ENCODE measurements at regions of chr17 and their contacts with region 1.

Region 1: DNA sequence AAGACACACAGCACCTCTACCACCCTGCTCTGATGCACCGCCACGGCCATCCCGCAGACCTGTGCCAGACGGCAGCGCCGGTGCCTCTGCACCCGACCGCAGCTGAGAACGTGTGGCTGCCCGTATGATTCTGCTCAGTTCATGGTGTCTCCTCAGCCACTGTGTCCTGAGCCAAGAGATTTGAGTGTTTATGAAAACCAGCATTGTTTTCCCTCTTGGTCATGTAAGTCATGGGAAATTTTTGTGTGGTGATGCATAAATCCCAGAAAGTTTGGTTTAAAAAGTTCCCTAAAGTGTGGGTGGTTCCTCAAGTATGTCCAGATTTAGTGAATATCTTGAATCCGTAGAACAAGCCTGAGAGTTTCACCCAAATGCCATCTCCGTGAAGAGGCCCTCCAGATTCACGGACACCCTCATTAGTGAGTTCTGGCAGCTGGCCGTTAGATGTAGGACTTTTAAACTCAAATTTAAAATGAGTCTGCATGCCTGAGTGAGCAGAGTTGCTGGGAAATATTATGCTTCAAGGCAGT is 57.6 kb downstream of the CDRT4 start:
- DNase-seq: no peak
- ATAC-seq: no peak
- H3K4me3 ChIP-seq: no peak overlapping the region
- H3K4me3 Mint-ChIP-seq: no peak overlapping the region
- H3K27ac ChIP-seq: no peak overlapping the region
- H3K27ac Mint-ChIP-seq: no peak overlapping the region
- H3K4me1 ChIP-seq: no peaks in the 10 kb centered on the region
- H3K4me1 Mint-ChIP-seq: no peaks in the 10 kb centered on the region
- H3K27me3 ChIP-seq: peaks cover 0 to 10% of the 10 kb centered on the region in 2 experiments
- H3K27me3 Mint-ChIP-seq: peaks cover 0 to 4% of the 10 kb centered on the region in 2 donors

Region 2: DNA sequence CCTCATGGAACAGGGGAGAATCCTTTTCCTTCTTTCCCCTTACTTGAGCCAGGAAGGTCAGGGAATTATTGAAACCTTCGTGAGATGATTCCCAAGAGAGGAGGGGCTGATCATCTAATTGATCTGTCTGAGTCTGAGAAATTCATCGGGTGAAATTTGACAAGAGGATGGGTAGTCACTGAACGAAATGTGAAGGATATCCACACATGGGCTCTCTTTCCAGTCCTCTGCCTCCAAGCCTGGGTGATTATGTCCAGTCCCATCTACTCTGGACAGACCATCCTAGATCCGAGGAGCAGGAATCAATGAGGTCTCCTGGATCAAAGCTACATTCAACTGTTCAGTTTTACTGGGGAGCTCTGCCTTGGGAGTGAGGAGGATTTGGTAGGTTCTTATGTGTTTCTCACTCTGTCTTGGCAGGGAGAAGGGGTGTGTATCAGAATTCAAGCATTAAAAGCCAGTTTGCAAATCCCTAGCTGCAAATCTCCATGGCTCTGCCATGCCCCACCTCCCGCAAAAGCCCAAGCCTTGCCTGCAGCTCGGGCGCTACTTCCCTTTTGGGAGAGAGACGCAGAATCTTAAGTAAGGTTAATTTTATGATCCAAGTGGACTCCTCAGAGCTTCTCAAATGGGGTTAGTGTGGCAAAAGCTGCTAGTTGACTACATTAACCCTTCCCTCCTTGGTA is 21.3 kb before region 1 on chr17:
- CTCF ChIA-PET with region 1: no interaction called
- POLR2A ChIA-PET with region 1: no interaction called
- DNase-seq: no peak
- ATAC-seq: no peak
- H3K4me3 ChIP-seq: no peak overlapping the region
- H3K4me3 Mint-ChIP-seq: no peak overlapping the region
- H3K27ac ChIP-seq: no peak overlapping the region
- H3K27ac Mint-ChIP-seq: no peak overlapping the region
- H3K4me1 ChIP-seq: no peaks in the 10 kb centered on the region
- H3K4me1 Mint-ChIP-seq: no peaks in the 10 kb centered on the region
- H3K27me3 ChIP-seq: peaks cover 0 to 11% of the 10 kb centered on the region in 2 experiments
- H3K27me3 Mint-ChIP-seq: peaks cover 19 to 23% of the 10 kb centered on the region in 2 donors

Region 3: GRCh38 chr17:15398736-15399331 is 11.0 kb before region 1 on chr17:
- CTCF ChIA-PET with region 1: interaction called in 1 of 2 experiments, 10 read pairs
- POLR2A ChIA-PET with region 1: no interaction called
- DNase-seq: no peak
- ATAC-seq: no peak
- H3K4me3 ChIP-seq: no peak overlapping the region
- H3K4me3 Mint-ChIP-seq: no peak overlapping the region
- H3K27ac ChIP-seq: no peak overlapping the region
- H3K27ac Mint-ChIP-seq: no peak overlapping the region
- H3K4me1 ChIP-seq: no peaks in the 10 kb centered on the region
- H3K4me1 Mint-ChIP-seq: no peaks in the 10 kb centered on the region
- H3K27me3 ChIP-seq: peaks cover 0 to 16% of the 10 kb centered on the region in 2 experiments
- H3K27me3 Mint-ChIP-seq: peaks cover 4 to 17% of the 10 kb centered on the region in 2 donors

Measured in T-cell (primary cell).